ENCODE measurements at regions of chr6 and their contacts with region 1.

Region 1: GRCh38 chr6:142946181-142946923 is 1.4 kb upstream of the HIVEP2 start:
- DNase-seq: peak; percentile 96
- ATAC-seq: peak; percentile 47
- H3K4me3 Mint-ChIP-seq: peak overlapping the region; percentile 96
- H3K27ac Mint-ChIP-seq: peak overlapping the region; percentile 96
- H3K4me1 Mint-ChIP-seq: peaks cover 27% of the 10 kb centered on the region
- H3K27me3 Mint-ChIP-seq: no peaks in the 10 kb centered on the region

Region 2: GRCh38 chr6:142692942-142693341 is 253.4 kb before region 1 on chr6:
- CTCF ChIA-PET with region 1: no interaction called
- POLR2A ChIA-PET with region 1: no interaction called
- intact Hi-C with region 1: loop called (anchors 2 to 5 kb)
- DNase-seq: peak; percentile 79
- ATAC-seq: peak; percentile 75
- H3K4me3 Mint-ChIP-seq: no peak overlapping the region
- H3K27ac Mint-ChIP-seq: peak overlapping the region; percentile 62
- H3K4me1 Mint-ChIP-seq: peaks cover 27% of the 10 kb centered on the region
- H3K27me3 Mint-ChIP-seq: no peaks in the 10 kb centered on the region

Region 3: GRCh38 chr6:142752348-142752747 is 194.0 kb before region 1 on chr6:
- CTCF ChIA-PET with region 1: no interaction called
- POLR2A ChIA-PET with region 1: no interaction called
- intact Hi-C with region 1: no loop called
- DNase-seq: no peak
- ATAC-seq: no peak
- H3K4me3 Mint-ChIP-seq: no peak overlapping the region
- H3K27ac Mint-ChIP-seq: no peak overlapping the region
- H3K4me1 Mint-ChIP-seq: peaks cover 31% of the 10 kb centered on the region
- H3K27me3 Mint-ChIP-seq: no peaks in the 10 kb centered on the region

Region 4: GRCh38 chr6:142850679-142851423 is 95.5 kb before region 1 on chr6:
- CTCF ChIA-PET with region 1: interaction called, 5 read pairs
- POLR2A ChIA-PET with region 1: no interaction called
- intact Hi-C with region 1: loop called in 1 of 2 experiments (anchors 1 kb)
- DNase-seq: peak; percentile 66
- ATAC-seq: peak; percentile 67
- H3K4me3 Mint-ChIP-seq: peak overlapping the region; percentile 37
- H3K27ac Mint-ChIP-seq: peak overlapping the region; percentile 86
- H3K4me1 Mint-ChIP-seq: peaks cover 95% of the 10 kb centered on the region
- H3K27me3 Mint-ChIP-seq: no peaks in the 10 kb centered on the region

Region 5: GRCh38 chr6:142902636-142903053 is 43.7 kb before region 1 on chr6:
- CTCF ChIA-PET with region 1: interaction called, 6 read pairs
- POLR2A ChIA-PET with region 1: interaction called, 4 read pairs
- intact Hi-C with region 1: loop called in 1 of 2 experiments (anchors 2 kb)
- DNase-seq: peak; percentile 84
- ATAC-seq: peak; percentile 56
- H3K4me3 Mint-ChIP-seq: peak overlapping the region; percentile 65
- H3K27ac Mint-ChIP-seq: peak overlapping the region; percentile 94
- H3K4me1 Mint-ChIP-seq: peaks cover 64% of the 10 kb centered on the region
- H3K27me3 Mint-ChIP-seq: no peaks in the 10 kb centered on the region

Region 6: GRCh38 chr6:142935553-142936517 is 10.5 kb before region 1 on chr6:
- CTCF ChIA-PET with region 1: interaction called, 57 read pairs
- POLR2A ChIA-PET with region 1: interaction called, 3 read pairs
- intact Hi-C with region 1: loop called in 1 of 2 experiments (anchors 1 kb)
- DNase-seq: peak; percentile 58
- ATAC-seq: peak; percentile 41
- H3K4me3 Mint-ChIP-seq: peak overlapping the region; percentile 59
- H3K27ac Mint-ChIP-seq: peak overlapping the region; percentile 86
- H3K4me1 Mint-ChIP-seq: peaks cover 89% of the 10 kb centered on the region
- H3K27me3 Mint-ChIP-seq: no peaks in the 10 kb centered on the region

Region 7: DNA sequence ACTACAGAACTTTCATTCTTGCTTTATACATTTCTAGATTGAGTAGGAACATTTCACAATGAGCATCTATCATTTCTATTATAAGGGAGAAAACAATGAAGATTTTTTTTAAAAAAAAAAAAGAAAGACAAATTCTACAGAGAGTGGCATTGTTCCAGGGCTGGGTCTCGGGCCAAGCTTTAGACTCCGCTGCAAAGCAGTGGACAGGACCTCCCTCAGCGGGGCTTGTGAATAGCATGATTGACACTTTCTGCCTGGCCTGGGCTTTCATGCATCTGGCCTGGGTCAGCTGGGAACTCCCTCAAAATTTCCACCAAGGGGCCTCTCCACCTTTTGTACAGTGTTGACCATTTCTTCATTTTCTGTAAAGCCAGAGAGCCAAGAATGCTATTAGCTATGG is 54.5 kb after region 1 on chr6:
- CTCF ChIA-PET with region 1: no interaction called
- POLR2A ChIA-PET with region 1: no interaction called
- intact Hi-C with region 1: no loop called
- DNase-seq: no peak
- ATAC-seq: no peak
- H3K4me3 Mint-ChIP-seq: no peak overlapping the region
- H3K27ac Mint-ChIP-seq: no peak overlapping the region
- H3K4me1 Mint-ChIP-seq: no peaks in the 10 kb centered on the region
- H3K27me3 Mint-ChIP-seq: no peaks in the 10 kb centered on the region

Region 8: DNA sequence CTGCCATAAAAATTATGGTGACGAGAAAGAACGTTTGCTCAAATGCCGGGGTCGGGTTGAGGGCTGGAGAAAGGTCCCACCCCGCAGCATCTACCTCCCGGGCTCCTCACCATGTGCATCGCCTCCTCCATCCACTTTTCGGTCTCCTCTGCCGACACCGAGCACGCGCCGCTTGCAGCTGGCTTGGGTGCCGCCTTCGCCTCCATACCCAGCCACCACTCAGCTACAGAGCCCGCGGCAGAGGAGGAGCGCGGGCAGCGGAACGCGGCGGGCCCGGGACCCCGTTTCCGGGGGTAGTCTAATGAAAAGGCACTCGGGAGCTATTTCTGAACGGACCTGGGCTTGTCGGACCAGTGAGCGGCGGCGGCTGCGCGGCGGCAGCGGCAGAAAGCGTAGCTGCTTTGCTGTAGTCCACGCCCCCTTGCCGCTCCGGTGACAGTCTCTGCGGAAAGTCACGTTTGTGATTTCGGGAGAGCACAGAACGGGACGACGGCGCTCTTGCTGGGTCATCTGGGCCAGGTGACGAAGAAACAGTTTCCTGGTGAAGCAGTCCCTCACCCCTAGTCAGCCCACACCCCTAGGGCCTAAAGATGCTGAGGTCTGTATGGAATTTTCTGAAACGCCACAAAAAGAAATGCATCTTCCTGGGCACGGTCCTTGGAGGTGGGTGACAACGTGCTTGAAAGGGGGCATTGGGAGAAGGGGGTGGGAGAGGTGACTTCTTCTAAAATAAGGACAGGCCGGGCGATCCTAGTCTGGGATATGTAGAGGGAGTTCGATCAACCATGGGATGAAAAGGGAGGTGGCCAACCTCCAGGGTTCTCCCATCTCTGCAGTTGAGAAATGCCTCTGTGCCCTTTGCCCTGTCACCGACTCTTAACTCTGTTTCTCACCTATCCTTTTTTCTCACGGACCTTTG is 504.4 kb after region 1 on chr6 and contains the starts of genes ADAT2 and PEX3:
- CTCF ChIA-PET with region 1: interaction called, 4 read pairs
- POLR2A ChIA-PET with region 1: no interaction called
- intact Hi-C with region 1: loop called (anchors 1 to 2 kb)
- DNase-seq: peak; percentile 97
- ATAC-seq: peak; percentile 95
- H3K4me3 Mint-ChIP-seq: peak within 1 kb of the TSS; percentile 88
- H3K27ac Mint-ChIP-seq: peak within 1 kb of the TSS; percentile 95
- H3K4me1 Mint-ChIP-seq: peaks cover 52% of the 10 kb centered on the region
- H3K27me3 Mint-ChIP-seq: no peaks in the 10 kb centered on the region
- total RNA-seq, gene ADAT2: 23.6 to 26.0 TPM
- total RNA-seq, gene PEX3: 31.1 to 42.2 TPM

Measured in activated CD4-positive, alpha-beta T cell treated with anti-CD3 and anti-CD28 coated beads for 36 hours (primary cell).